Body of pancreas (tissue), 4 donors: ENCODE measurements at regions of chr17 and their contacts with region 1.

Region 1: DNA sequence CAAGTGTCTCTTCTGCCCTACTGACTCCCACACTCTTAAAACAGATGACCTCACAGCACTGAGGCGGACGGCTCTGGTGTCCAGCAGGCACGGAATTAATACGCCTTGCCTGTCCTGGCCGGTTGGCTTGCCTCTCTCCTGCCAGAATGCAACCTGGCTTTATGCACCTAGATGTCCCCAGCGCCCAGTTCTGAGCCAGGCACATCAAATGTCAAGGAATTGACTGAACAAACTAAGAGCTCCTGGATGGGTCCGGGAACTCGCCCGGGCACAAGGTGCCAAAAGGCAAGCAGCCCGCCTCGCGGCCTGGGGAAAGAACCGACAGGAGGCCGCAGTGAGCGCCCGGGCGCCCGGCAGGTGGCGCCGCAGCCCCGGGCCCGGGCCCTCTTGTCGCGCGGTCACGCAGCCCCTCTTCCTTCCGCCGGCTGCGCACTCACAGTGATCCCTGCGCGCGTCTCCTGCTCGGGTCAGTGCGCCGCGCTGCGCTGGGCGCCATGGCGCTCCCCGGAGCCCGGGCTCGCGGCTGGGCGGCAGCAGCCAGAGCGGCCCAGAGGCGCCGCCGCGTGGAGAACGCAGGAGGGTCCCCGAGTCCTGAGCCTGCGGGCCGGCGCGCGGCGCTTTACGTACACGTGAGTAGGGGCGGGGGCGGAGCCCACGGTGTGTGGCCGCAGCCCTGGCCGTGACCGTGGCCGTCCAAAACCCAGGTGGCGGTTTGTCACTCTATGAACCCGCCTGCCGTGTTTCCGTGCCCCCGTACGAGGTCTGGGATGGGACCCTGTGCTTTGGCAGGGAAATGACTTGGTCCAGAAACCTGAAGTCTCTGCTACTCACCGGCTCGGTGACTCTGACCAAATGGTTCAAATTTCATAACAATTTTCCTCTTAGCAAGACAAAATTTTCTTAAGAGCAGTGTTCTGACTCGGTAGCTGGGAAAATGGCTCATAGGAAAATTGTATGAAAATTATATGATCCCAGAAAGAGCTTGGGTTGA is at the start of gene RSAD1:
- DNase-seq: peak; percentile 91 to 94 (median 92)
- ATAC-seq: peak; percentile 86
- H3K4me3 ChIP-seq: peak within 1 kb of the TSS; percentile 11 to 65
- H3K27ac ChIP-seq: peak within 1 kb of the TSS; percentile 76 to 92 (median 86)
- H3K4me1 ChIP-seq: peaks cover 66% of the 10 kb centered on the region
- H3K27me3 ChIP-seq: no peaks in the 10 kb centered on the region
- CTCF ChIP-seq: peak; percentile 82 to 99 (median 90)
- POLR2A ChIP-seq: peak; percentile 77 to 97 (median 85)
- total RNA-seq, gene RSAD1: 39.2 to 44.5 TPM

Region 2: DNA sequence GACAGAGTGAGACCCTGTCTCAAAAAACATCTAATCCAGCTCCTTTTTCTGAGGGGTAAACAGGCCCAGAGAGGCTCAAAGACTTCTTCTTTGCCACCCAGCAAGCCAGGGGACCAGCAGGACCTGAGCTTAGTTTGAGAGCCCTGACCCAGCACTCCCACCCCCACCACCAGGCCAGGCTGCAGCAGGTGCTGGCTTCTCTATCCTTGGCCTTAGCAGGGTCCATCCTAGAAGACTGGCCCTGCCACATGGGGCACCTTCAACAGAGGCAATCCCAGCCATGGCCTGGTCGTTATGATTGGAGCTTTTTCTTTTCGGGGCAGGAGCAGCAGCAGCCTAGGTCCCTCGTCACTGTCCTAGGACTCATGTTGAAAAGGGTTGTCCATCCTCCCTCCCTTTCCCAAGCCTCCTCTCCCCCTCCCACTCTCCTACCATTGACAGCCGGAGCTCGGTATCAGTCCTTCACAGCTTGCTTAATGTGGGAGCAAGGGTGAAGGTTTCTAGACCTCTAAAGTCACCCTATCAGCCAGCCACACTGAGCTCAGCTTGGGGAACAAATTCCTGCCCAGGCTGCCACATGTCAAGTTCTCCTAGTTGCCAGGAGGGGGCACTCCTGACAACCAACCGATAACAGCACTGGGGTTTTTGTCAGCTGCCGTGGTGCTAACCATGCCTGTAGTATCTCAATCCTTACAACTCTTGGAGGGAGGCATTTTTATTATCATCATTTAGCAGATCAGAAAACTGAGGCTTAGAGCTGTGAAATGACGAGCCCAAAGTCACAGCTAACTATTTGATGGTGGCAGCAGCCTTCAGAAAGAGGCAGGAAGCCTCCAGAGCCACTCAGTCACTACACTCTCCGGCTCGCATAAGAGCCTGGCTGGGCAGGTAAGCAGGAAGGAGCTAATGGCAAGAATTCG is 116.9 kb before region 1 on chr17:
- intact Hi-C with region 1: loop called (anchors 10 kb)
- DNase-seq: peak; percentile 71 to 81 (median 77)
- ATAC-seq: peak; percentile 89
- H3K4me3 ChIP-seq: no peak overlapping the region
- H3K27ac ChIP-seq: peak overlapping the region in 2 of 4 donors; percentile 35 to 59
- H3K4me1 ChIP-seq: peaks cover 17% of the 10 kb centered on the region
- H3K27me3 ChIP-seq: no peaks in the 10 kb centered on the region
- CTCF ChIP-seq: peak; percentile 56 to 83 (median 80)
- POLR2A ChIP-seq: no peak

Region 3: GRCh38 chr17:50534222-50534978 is 55.7 kb after region 1 on chr17:
- intact Hi-C with region 1: loop called (anchors 5 kb)
- DNase-seq: peak; percentile 80 to 89 (median 82)
- ATAC-seq: peak; percentile 82
- H3K4me3 ChIP-seq: no peak overlapping the region
- H3K27ac ChIP-seq: peak overlapping the region; percentile 79 to 96 (median 90)
- H3K4me1 ChIP-seq: peaks cover 79% of the 10 kb centered on the region
- H3K27me3 ChIP-seq: no peaks in the 10 kb centered on the region
- CTCF ChIP-seq: peak; percentile 36 to 79 (median 62)
- POLR2A ChIP-seq: peak; percentile 63 to 74 (median 67)

Region 4: GRCh38 chr17:50613007-50613992 is 134.6 kb after region 1 on chr17:
- intact Hi-C with region 1: loop called (anchors 10 kb)
- DNase-seq: no peak
- ATAC-seq: no peak
- H3K4me3 ChIP-seq: no peak overlapping the region
- H3K27ac ChIP-seq: no peak overlapping the region
- H3K4me1 ChIP-seq: no peaks in the 10 kb centered on the region
- H3K27me3 ChIP-seq: no peaks in the 10 kb centered on the region
- CTCF ChIP-seq: no peak
- POLR2A ChIP-seq: no peak

Region 5: GRCh38 chr17:50689956-50690886 is 211.5 kb after region 1 on chr17:
- intact Hi-C with region 1: loop called (anchors 10 kb)
- DNase-seq: peak in 1 of 4 donors; percentile 22
- ATAC-seq: no peak
- H3K4me3 ChIP-seq: no peak overlapping the region
- H3K27ac ChIP-seq: peak overlapping the region; percentile 90 to 94 (median 94)
- H3K4me1 ChIP-seq: peaks cover 96% of the 10 kb centered on the region
- H3K27me3 ChIP-seq: no peaks in the 10 kb centered on the region
- CTCF ChIP-seq: no peak
- POLR2A ChIP-seq: no peak